ENCODE measurements at regions of chr4 and their contacts with region 1.

Region 1: DNA sequence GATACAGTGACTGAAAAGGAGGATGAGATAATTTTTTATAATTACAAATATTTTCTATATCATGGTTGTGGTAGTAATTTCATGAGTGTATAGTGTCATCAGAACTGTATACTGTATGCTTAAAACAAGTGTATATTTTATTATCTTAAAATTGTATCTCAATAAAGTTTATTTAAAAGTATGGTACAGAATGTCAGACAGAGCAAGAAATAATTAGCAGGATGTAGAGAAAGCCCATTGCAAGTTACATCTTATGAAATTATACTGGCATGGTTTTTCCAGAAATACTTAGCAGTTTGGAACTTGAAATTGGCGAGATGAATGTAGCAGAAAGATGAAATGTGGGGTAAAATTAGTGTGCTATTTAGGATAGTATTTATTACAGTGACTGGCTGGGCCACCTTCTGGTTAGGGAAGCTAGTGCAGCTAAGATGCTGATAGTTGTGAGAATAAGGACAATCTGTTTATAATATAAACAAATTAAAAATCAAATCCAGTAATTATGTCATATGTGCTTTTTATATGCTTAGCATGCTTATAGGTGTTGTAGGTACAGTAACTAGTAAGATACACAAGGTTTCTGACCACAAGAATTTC is 74.7 kb downstream of the IL15 start:
- DNase-seq: no peak
- H3K4me3 ChIP-seq: no peak overlapping the region
- H3K27ac ChIP-seq: no peak overlapping the region
- H3K4me1 ChIP-seq: no peaks in the 10 kb centered on the region
- H3K27me3 ChIP-seq: no peaks in the 10 kb centered on the region
- CTCF ChIP-seq: peak; percentile 75

Region 2: GRCh38 chr4:141346144-141346543 is 365.0 kb before region 1 on chr4:
- intact Hi-C with region 1: loop called (anchors 5 kb)
- DNase-seq: no peak
- H3K4me3 ChIP-seq: no peak overlapping the region
- H3K27ac ChIP-seq: no peak overlapping the region
- H3K4me1 ChIP-seq: peaks cover 6% of the 10 kb centered on the region
- H3K27me3 ChIP-seq: no peaks in the 10 kb centered on the region
- CTCF ChIP-seq: peak; percentile 72

Region 3: GRCh38 chr4:142016031-142016430 is 304.9 kb after region 1 on chr4:
- intact Hi-C with region 1: no loop called
- DNase-seq: no peak
- H3K4me3 ChIP-seq: no peak overlapping the region
- H3K27ac ChIP-seq: no peak overlapping the region
- H3K4me1 ChIP-seq: no peaks in the 10 kb centered on the region
- H3K27me3 ChIP-seq: no peaks in the 10 kb centered on the region
- CTCF ChIP-seq: no peak

Measured in left ventricle myocardium inferior (tissue), 1 donor.